ENCODE measurements at regions of chrX and their contacts with region 1.

Region 1: GRCh38 chrX:115560978-115561604 is at the start of gene PLS3:
- DNase-seq: peak; percentile 47
- ATAC-seq: peak; percentile 78
- H3K4me3 Mint-ChIP-seq: peak within 1 kb of the TSS; percentile 60
- H3K27ac Mint-ChIP-seq: no peak within 1 kb of the TSS
- H3K4me1 Mint-ChIP-seq: no peaks in the 10 kb centered on the region
- H3K27me3 Mint-ChIP-seq: peaks cover 16% of the 10 kb centered on the region
- CTCF ChIP-seq: no peak
- total RNA-seq, gene PLS3: 2.0 to 2.2 TPM

Region 2: DNA sequence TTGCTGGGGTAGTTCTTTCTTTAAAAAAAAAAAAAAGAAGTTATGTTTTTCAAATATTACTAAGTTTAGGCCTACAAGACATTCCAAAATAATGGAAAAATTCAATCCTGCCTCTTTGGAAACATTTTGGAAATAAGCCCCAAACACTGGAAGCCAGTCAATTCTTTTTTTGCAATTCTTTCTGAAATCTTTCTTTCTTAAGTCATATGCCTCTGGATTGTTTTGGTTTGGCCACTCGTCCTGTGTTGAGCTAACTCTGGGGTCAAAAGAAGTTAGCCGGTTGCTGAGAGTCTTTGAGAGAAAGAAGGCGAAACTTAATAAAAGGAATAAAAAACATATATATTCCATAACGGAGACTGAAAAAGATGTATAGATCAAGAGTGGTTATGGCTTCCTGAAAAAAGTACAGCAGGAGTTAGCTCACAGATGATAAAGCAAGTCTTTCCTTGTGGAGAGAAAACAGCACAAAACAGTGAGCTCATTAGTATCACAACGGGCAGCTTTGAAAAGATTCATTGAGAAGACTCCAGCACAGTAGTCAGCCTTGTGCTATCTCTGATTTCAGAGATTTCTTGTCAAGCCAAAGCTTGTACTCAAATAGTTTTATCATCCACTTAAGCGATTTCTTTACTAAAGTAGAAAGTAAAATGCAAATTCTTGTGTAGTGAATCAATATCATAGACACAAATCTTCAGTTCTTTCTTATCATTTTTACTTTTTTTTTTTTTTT is 64.6 kb after region 1 on chrX:
- CTCF ChIA-PET with region 1: no interaction called
- POLR2A ChIA-PET with region 1: no interaction called
- intact Hi-C with region 1: loop called (anchors 10 kb)
- DNase-seq: no peak
- ATAC-seq: no peak
- H3K4me3 Mint-ChIP-seq: no peak overlapping the region
- H3K27ac Mint-ChIP-seq: no peak overlapping the region
- H3K4me1 Mint-ChIP-seq: no peaks in the 10 kb centered on the region
- H3K27me3 Mint-ChIP-seq: no peaks in the 10 kb centered on the region
- CTCF ChIP-seq: no peak

Measured in activated CD8-positive, alpha-beta T cell treated with anti-CD3 and anti-CD28 coated beads for 36 hours (primary cell).